ENCODE measurements at regions of chr11 and their contacts with region 1.

Region 1: GRCh38 chr11:14054116-14055107 is 91.9 kb downstream of the SPON1 start:
- DNase-seq: peak; percentile 67 to 74
- ATAC-seq: peak; percentile 30
- H3K4me3 ChIP-seq: no peak overlapping the region
- H3K27ac ChIP-seq: no peak overlapping the region
- H3K4me1 ChIP-seq: no peaks in the 10 kb centered on the region
- H3K27me3 ChIP-seq: no peaks in the 10 kb centered on the region

Region 2: GRCh38 chr11:14010665-14011064 is 43.7 kb before region 1 on chr11:
- intact Hi-C with region 1: loop called in 1 of 2 experiments (anchors 2 kb)
- DNase-seq: no peak
- ATAC-seq: no peak
- H3K4me3 ChIP-seq: no peak overlapping the region
- H3K27ac ChIP-seq: no peak overlapping the region
- H3K4me1 ChIP-seq: peaks cover 0 to 4% of the 10 kb centered on the region in 2 donors
- H3K27me3 ChIP-seq: no peaks in the 10 kb centered on the region